ENCODE measurements at regions of chr2 and their contacts with region 1.

Region 1: DNA sequence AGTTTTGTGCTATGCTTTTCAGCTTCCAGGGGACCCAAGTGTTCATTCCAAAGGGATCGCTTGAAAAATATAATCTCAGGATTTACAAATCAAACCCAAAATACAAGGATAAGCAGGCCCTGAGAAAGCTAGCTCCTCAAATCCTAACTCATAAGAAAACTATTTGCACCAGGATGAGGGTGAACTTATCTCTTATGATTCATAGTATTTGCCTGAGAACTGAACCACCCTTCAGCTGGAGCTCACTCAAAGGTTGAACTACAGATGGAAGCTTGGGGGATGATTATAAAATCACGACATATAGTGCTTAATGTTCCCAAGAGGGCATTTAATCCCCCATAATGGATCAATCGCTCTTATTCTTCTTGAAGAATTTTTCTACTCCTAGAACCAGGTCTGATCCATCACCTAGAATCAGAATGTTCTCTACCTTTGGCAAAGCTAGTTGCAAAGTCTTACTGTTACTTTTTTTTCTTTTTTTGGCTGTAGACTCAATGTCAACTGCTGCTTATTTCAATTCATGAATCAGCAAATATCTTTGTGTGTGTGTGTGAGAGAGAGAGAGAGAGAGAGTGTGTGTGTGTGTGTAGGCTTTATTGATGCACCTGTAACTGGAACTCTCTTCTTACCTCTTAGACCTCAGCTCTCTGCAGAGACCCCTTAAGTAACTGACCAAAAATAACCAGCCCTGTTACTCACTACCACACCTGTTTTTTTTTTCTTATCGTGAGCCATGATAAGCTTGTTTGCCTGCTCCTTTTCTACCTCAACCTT is 44.8 kb downstream of the ARL4C start:
- DNase-seq: peak in 2 of 35 experiments; percentile 40 to 50
- ATAC-seq: peak in 3 of 4 experiments; percentile 3 to 11 (median 11)
- H3K4me3 ChIP-seq: peak overlapping the region; percentile 64 to 83
- H3K4me3 Mint-ChIP-seq: peak overlapping the region; percentile 87 to 90 (median 88)
- H3K27ac ChIP-seq: peak overlapping the region; percentile 90
- H3K27ac Mint-ChIP-seq: peak overlapping the region; percentile 91 to 99
- H3K4me1 ChIP-seq: peaks cover 49 to 68% of the 10 kb centered on the region in 2 experiments
- H3K4me1 Mint-ChIP-seq: peaks cover 82 to 94% (median 94%) of the 10 kb centered on the region in 3 donors
- H3K27me3 ChIP-seq: no peaks in the 10 kb centered on the region
- H3K27me3 Mint-ChIP-seq: no peaks in the 10 kb centered on the region

Region 2: DNA sequence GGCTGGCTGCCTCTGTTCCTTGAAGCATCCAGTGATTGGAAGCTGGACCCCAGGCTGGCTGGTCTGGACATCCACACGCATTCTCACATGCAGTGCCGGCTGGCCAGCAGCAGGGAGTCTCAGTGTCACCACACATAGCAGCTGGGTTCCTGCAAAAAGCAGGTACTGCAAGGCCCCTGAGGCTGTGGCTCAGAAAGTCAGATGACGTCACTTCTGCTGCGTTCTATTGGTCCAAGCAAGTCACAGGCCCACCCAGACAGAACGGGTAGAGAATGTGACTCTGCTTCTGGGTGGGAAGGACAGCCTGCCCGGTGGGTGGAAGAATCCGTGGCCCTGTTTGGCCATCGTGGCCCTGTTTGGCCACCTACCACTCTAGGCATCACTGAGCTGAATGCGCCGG is 452.9 kb before region 1 on chr2:
- CTCF ChIA-PET with region 1: no interaction called
- POLR2A ChIA-PET with region 1: no interaction called
- DNase-seq: no peak
- ATAC-seq: no peak
- H3K4me3 ChIP-seq: no peak overlapping the region
- H3K4me3 Mint-ChIP-seq: no peak overlapping the region
- H3K27ac ChIP-seq: no peak overlapping the region
- H3K27ac Mint-ChIP-seq: no peak overlapping the region
- H3K4me1 ChIP-seq: peaks cover 10 to 44% of the 10 kb centered on the region in 2 experiments
- H3K4me1 Mint-ChIP-seq: peaks cover 27 to 69% (median 40%) of the 10 kb centered on the region in 3 donors
- H3K27me3 ChIP-seq: no peaks in the 10 kb centered on the region
- H3K27me3 Mint-ChIP-seq: peaks cover 0 to 1% of the 10 kb centered on the region in 2 donors

Region 3: GRCh38 chr2:234288974-234289455 is 163.0 kb before region 1 on chr2:
- CTCF ChIA-PET with region 1: interaction called in 1 of 2 experiments, 9 read pairs
- POLR2A ChIA-PET with region 1: interaction called, 8 to 26 read pairs
- DNase-seq: peak; percentile 53 to 88 (median 70)
- ATAC-seq: peak in 1 of 4 experiments; percentile 1
- H3K4me3 ChIP-seq: no peak overlapping the region
- H3K4me3 Mint-ChIP-seq: peak overlapping the region in 1 of 3 donors; percentile 75
- H3K27ac ChIP-seq: peak overlapping the region; percentile 100
- H3K27ac Mint-ChIP-seq: peak overlapping the region; percentile 91 to 99
- H3K4me1 ChIP-seq: peaks cover 42 to 65% of the 10 kb centered on the region in 2 experiments
- H3K4me1 Mint-ChIP-seq: peaks cover 68 to 80% (median 74%) of the 10 kb centered on the region in 3 donors
- H3K27me3 ChIP-seq: no peaks in the 10 kb centered on the region
- H3K27me3 Mint-ChIP-seq: no peaks in the 10 kb centered on the region

Region 4: DNA sequence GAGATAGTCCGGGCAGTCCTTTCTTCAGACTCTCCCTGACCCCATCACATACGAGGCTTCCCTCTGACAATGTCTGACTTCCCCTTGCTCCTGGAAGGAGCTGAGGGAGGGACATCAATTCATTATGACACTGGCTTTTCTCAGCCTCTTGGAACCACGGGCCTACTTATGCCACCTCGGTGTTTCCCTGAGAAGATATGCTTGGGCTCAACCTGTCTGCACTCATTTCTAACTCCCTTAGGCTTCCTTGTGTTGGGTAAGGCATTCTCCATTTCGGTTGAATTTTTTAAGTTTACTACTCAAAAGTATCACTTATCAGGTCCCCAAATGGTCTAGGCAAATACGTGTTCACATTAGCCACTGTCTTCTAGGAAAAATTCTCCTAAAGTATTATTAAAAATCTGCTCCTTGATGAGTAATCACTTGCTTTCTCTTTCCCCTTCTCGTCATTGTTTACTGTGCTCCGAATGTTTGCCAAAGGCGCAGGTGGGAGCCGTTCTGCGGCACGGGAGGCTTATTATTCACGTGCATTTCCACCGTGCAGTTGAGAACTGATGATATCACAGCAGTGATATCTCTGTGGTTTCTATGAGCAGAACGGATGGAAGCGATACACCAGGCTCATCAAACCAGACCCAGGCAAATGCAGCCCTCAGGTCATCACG is 11.7 kb after region 1 on chr2:
- CTCF ChIA-PET with region 1: interaction called, 3 to 12 read pairs
- POLR2A ChIA-PET with region 1: interaction called, 16 to 18 read pairs
- DNase-seq: peak; percentile 54 to 93 (median 79)
- ATAC-seq: peak; percentile 88 to 92 (median 90)
- H3K4me3 ChIP-seq: peak overlapping the region in 1 of 2 donors; percentile 23
- H3K4me3 Mint-ChIP-seq: peak overlapping the region; percentile 65 to 74 (median 71)
- H3K27ac ChIP-seq: peak overlapping the region; percentile 98
- H3K27ac Mint-ChIP-seq: peak overlapping the region; percentile 96 to 97
- H3K4me1 ChIP-seq: peaks cover 39 to 74% of the 10 kb centered on the region in 2 experiments
- H3K4me1 Mint-ChIP-seq: peaks cover 78 to 91% (median 81%) of the 10 kb centered on the region in 3 donors
- H3K27me3 ChIP-seq: no peaks in the 10 kb centered on the region
- H3K27me3 Mint-ChIP-seq: no peaks in the 10 kb centered on the region

Region 5: GRCh38 chr2:234483568-234484251 is 31.7 kb after region 1 on chr2:
- CTCF ChIA-PET with region 1: interaction called, 3 to 18 read pairs
- POLR2A ChIA-PET with region 1: interaction called, 3 to 33 read pairs
- DNase-seq: peak; percentile 47 to 94 (median 87)
- ATAC-seq: peak; percentile 73 to 78 (median 77)
- H3K4me3 ChIP-seq: peak overlapping the region; percentile 11 to 26
- H3K4me3 Mint-ChIP-seq: peak overlapping the region; percentile 26 to 73 (median 51)
- H3K27ac ChIP-seq: peak overlapping the region; percentile 91
- H3K27ac Mint-ChIP-seq: peak overlapping the region; percentile 93 to 98
- H3K4me1 ChIP-seq: peaks cover 31 to 73% of the 10 kb centered on the region in 2 experiments
- H3K4me1 Mint-ChIP-seq: peaks cover 75 to 92% (median 90%) of the 10 kb centered on the region in 3 donors
- H3K27me3 ChIP-seq: no peaks in the 10 kb centered on the region
- H3K27me3 Mint-ChIP-seq: no peaks in the 10 kb centered on the region

Region 6: GRCh38 chr2:234490271-234491091 is 38.4 kb after region 1 on chr2:
- CTCF ChIA-PET with region 1: interaction called in 1 of 2 experiments, 5 read pairs
- POLR2A ChIA-PET with region 1: interaction called, 11 to 17 read pairs
- DNase-seq: peak in 11 of 35 experiments; percentile 16 to 56 (median 29)
- ATAC-seq: peak in 3 of 4 experiments; percentile 32 to 44 (median 35)
- H3K4me3 ChIP-seq: peak overlapping the region; percentile 81 to 99
- H3K4me3 Mint-ChIP-seq: peak overlapping the region; percentile 95 to 99 (median 99)
- H3K27ac ChIP-seq: peak overlapping the region; percentile 91
- H3K27ac Mint-ChIP-seq: peak overlapping the region; percentile 98 to 99
- H3K4me1 ChIP-seq: peaks cover 45 to 61% of the 10 kb centered on the region in 2 experiments
- H3K4me1 Mint-ChIP-seq: peaks cover 64 to 76% (median 67%) of the 10 kb centered on the region in 3 donors
- H3K27me3 ChIP-seq: no peaks in the 10 kb centered on the region
- H3K27me3 Mint-ChIP-seq: no peaks in the 10 kb centered on the region